Activated T-helper 1 cell treated with anti-CD3 and anti-CD28 coated beads, Interleukin-12 subunit alpha, Interleukin-12 subunit beta, Interleukin-2, Interleukin-4 antibody, amounts not matched to agents 30 ng/mL and 10 ng/mL and 1 ng/mL, durations not matched to agents 14 hours and 24 hours and 36 hours (primary cell): ENCODE measurements at regions of chr2 and their contacts with region 1.

Region 1: GRCh38 chr2:196926562-196927375 is at the start of gene PGAP1:
- DNase-seq: peak; percentile 87
- H3K4me3 Mint-ChIP-seq: peak within 1 kb of the TSS; percentile 95
- H3K27ac Mint-ChIP-seq: peak within 1 kb of the TSS; percentile 99
- H3K4me1 Mint-ChIP-seq: peaks cover 45% of the 10 kb centered on the region
- H3K27me3 Mint-ChIP-seq: peaks cover 1% of the 10 kb centered on the region
- total RNA-seq, gene PGAP1: 30.1 TPM in 2 replicates

Region 2: GRCh38 chr2:196160101-196160500 is 766.7 kb before region 1 on chr2:
- intact Hi-C with region 1: loop called (anchors 5 kb)
- DNase-seq: peak; percentile 74
- H3K4me3 Mint-ChIP-seq: peak overlapping the region; percentile 76
- H3K27ac Mint-ChIP-seq: peak overlapping the region; percentile 93
- H3K4me1 Mint-ChIP-seq: peaks cover 91% of the 10 kb centered on the region
- H3K27me3 Mint-ChIP-seq: no peaks in the 10 kb centered on the region

Region 3: DNA sequence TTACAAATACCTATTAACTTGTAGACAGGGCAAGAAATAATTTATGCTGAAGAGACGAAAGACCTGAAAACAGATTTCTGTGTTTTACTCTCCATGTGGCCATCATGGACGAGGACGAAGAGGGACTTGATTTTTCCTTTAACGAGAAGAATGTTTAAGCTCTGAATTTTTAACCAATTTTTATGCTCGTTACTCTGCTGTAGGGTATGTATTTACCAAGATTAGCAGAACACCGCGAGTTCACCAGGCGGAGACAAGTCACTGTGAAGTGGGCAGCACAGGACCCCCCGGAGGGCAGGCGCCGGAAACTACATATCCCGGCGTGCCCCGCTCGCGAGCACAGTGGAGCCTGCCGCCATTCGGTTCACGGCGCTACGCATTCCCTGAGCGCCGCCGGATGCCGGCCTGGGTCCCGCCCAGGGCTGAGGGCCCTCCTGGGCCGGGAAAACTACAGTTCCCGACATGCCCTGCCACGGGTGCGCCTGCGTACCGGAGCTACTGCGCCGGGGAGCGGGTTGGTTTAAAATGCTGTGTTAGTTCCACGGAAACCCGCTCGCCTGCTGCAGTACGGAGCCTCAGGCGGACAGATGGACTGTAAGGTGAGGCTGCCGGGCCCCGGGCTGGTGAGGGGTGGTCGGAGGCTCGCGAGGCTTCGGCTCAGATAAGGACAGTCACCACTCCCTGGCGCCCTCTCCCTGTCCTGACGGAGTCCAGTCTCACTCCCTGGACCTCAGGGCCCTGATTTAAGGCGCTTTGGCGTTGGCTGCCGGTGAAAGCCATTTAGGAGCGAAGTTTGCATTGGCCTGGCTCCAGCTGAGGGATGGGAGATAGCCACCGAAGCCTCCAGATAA is 287.4 kb before region 1 on chr2 and contains the start of gene CCDC150:
- intact Hi-C with region 1: no loop called
- DNase-seq: peak; percentile 93
- H3K4me3 Mint-ChIP-seq: peak within 1 kb of the TSS; percentile 78
- H3K27ac Mint-ChIP-seq: peak within 1 kb of the TSS; percentile 81
- H3K4me1 Mint-ChIP-seq: peaks cover 28% of the 10 kb centered on the region
- H3K27me3 Mint-ChIP-seq: peaks cover 13% of the 10 kb centered on the region
- total RNA-seq, gene CCDC150: 16.7 and 19.6 TPM in 2 replicates

Region 4: DNA sequence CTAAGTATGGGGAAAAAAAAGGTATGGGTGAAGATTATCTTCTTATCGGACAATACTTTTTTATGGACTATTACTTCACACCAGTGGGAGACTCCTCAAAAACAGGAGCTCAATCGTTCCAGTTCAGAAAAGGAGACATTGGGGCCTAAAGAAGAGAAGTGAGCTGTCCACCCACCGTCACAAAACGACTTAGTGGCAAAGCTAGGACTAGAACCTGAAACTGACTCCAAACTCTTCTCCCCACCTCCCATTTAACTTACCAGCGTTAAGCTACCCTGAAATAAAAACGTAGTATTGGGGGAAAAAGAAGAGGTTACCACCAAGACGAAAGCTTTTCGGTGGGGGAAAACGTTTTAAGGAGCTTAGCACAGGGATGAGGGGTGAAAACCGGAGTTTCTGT is 127.8 kb before region 1 on chr2:
- intact Hi-C with region 1: loop called (anchors 1 kb)
- DNase-seq: no peak
- H3K4me3 Mint-ChIP-seq: peak overlapping the region; percentile 96
- H3K27ac Mint-ChIP-seq: peak overlapping the region; percentile 93
- H3K4me1 Mint-ChIP-seq: peaks cover 31% of the 10 kb centered on the region
- H3K27me3 Mint-ChIP-seq: peaks cover 2% of the 10 kb centered on the region

Region 5: GRCh38 chr2:196895656-196896055 is 31.1 kb before region 1 on chr2:
- intact Hi-C with region 1: no loop called
- DNase-seq: no peak
- H3K4me3 Mint-ChIP-seq: no peak overlapping the region
- H3K27ac Mint-ChIP-seq: peak overlapping the region; percentile 12
- H3K4me1 Mint-ChIP-seq: peaks cover 17% of the 10 kb centered on the region
- H3K27me3 Mint-ChIP-seq: no peaks in the 10 kb centered on the region

Region 6: GRCh38 chr2:196915507-196916189 is 11.1 kb before region 1 on chr2:
- intact Hi-C with region 1: loop called (anchors 1 kb)
- DNase-seq: no peak
- H3K4me3 Mint-ChIP-seq: peak overlapping the region; percentile 43
- H3K27ac Mint-ChIP-seq: peak overlapping the region; percentile 93
- H3K4me1 Mint-ChIP-seq: peaks cover 61% of the 10 kb centered on the region
- H3K27me3 Mint-ChIP-seq: no peaks in the 10 kb centered on the region

Region 7: DNA sequence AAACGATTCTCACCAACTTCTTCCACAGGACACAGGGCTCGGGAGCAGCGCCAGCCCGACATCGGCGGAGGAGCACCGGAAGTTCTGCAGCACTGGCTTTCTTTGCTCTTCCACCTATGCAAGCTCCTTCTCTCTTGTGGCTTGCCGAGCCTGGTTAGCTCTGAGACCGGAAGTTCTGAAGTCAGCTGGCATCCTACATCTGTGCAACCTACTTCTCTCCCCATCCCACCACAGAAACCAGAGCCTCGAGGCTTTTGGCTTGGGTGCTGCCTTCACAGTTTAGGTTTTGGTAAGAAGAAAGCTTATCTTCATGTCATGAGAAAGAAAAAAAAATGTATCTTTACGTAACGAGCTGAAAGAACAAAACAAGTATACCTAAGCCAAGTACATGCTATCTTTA is 272.1 kb after region 1 on chr2:
- intact Hi-C with region 1: loop called (anchors 2 kb)
- DNase-seq: peak; percentile 90
- H3K4me3 Mint-ChIP-seq: peak overlapping the region; percentile 87
- H3K27ac Mint-ChIP-seq: peak overlapping the region; percentile 98
- H3K4me1 Mint-ChIP-seq: peaks cover 91% of the 10 kb centered on the region
- H3K27me3 Mint-ChIP-seq: peaks cover 2% of the 10 kb centered on the region

Region 8: DNA sequence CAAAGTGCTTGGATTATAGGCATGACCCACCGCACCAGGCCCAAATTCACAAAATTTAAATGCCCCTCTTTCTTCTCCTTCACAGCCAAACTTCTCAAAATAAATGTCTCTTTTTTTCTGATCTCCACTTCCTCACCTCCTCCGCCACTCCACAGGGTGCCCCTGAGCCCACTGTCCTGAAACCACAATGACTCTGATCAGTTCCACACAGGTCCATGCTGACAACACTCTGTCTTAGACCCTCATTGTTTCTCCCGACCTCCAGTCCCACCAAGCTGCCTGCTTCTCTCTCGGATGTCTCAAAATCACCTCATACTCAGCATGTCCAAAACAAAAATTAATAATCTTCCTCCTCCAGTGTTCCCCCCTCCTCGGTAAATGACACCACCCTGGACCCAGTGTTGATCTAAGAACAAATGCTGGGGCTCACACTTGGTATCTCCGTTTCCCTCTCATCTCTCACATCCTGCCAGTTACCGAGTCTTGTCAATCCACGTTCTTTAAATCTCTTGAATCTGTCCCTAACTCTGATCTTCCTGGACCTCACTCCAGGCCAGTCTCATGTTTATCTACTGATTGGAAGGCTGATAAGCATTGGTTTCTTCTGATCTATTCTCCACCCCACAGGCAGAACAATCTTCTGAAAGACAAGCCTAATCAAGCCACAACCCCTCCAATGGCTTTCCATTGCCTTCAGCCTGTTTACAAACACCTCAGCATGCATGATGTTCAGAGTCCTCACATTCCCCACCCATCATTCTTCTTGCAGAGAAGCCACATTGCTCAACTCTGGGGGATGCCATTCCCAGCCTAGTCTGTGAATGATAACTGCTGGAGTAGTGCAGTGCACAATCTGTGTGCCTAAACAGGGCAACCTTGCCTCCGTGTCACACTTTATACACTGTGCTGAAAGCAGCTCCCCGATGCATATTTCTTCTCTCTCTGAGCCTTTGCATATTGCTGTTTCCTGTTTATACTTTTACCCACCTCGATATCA is 396.3 kb after region 1 on chr2:
- intact Hi-C with region 1: no loop called
- DNase-seq: no peak
- H3K4me3 Mint-ChIP-seq: peak overlapping the region; percentile 71
- H3K27ac Mint-ChIP-seq: peak overlapping the region; percentile 87
- H3K4me1 Mint-ChIP-seq: peaks cover 50% of the 10 kb centered on the region
- H3K27me3 Mint-ChIP-seq: no peaks in the 10 kb centered on the region

Region 9: DNA sequence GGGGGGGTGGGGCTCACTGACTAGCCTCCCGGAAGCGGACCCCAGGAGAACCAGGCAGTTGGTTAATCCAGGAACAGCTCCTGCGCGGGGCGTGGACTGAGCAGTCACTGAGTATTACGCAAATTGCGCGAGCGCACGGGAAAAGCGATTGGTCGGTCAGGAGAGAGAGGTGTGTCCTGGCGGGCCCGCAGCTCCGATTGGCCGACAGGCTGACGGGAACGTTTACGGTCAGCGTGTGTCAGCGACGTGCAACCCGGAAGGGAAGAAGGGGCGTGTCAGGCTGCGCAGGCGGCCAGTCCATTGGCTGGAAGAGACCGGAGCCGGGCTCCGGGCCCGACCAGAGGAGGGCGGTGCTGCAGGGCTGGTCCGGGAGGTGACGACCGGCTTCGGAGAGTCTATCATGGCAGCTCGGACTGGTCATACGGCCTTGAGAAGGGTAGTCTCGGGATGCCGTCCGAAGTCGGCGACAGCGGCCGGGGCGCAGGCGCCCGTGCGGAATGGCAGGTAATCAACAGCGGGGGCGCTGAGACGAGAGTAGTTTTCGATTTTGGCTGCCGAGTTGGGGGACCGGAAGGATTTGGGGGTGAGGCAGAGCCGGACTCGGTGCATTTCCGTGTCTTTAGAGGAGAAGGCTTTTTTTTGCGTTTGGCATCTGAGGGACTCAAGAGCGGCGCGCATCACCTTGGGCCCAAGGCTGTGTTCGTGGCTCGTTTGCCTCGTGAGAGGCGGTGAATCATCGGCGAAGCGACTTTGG is 526.6 kb after region 1 on chr2 and contains the start of gene COQ10B:
- intact Hi-C with region 1: loop called (anchors 1 kb)
- DNase-seq: peak; percentile 99
- H3K4me3 Mint-ChIP-seq: peak within 1 kb of the TSS; percentile 99
- H3K27ac Mint-ChIP-seq: peak within 1 kb of the TSS; percentile 100
- H3K4me1 Mint-ChIP-seq: peaks cover 40% of the 10 kb centered on the region
- H3K27me3 Mint-ChIP-seq: no peaks in the 10 kb centered on the region
- total RNA-seq, gene COQ10B: 26.9 and 28.8 TPM in 2 replicates